ENCODE measurements at regions of chr2 and their contacts with region 1.

Region 1: GRCh38 chr2:204538182-204539018 is 6.9 kb upstream of the PARD3B start:
- DNase-seq: peak; percentile 93
- H3K4me3 ChIP-seq: peak overlapping the region in 2 of 3 experiments; percentile 6 to 51
- H3K27ac ChIP-seq: peak overlapping the region; percentile 81
- H3K4me1 ChIP-seq: peaks cover 32% of the 10 kb centered on the region
- H3K27me3 ChIP-seq: no peaks in the 10 kb centered on the region
- CTCF ChIP-seq: no peak
- POLR2A ChIP-seq: no peak

Region 2: GRCh38 chr2:204340511-204340910 is 197.9 kb before region 1 on chr2:
- CTCF ChIA-PET with region 1: no interaction called
- POLR2A ChIA-PET with region 1: no interaction called
- dilution Hi-C with region 1: no loop called
- intact Hi-C with region 1: loop called (anchors 5 kb)
- DNase-seq: no peak
- H3K4me3 ChIP-seq: no peak overlapping the region
- H3K27ac ChIP-seq: no peak overlapping the region
- H3K4me1 ChIP-seq: no peaks in the 10 kb centered on the region
- H3K27me3 ChIP-seq: no peaks in the 10 kb centered on the region
- CTCF ChIP-seq: no peak
- POLR2A ChIP-seq: no peak

Region 3: DNA sequence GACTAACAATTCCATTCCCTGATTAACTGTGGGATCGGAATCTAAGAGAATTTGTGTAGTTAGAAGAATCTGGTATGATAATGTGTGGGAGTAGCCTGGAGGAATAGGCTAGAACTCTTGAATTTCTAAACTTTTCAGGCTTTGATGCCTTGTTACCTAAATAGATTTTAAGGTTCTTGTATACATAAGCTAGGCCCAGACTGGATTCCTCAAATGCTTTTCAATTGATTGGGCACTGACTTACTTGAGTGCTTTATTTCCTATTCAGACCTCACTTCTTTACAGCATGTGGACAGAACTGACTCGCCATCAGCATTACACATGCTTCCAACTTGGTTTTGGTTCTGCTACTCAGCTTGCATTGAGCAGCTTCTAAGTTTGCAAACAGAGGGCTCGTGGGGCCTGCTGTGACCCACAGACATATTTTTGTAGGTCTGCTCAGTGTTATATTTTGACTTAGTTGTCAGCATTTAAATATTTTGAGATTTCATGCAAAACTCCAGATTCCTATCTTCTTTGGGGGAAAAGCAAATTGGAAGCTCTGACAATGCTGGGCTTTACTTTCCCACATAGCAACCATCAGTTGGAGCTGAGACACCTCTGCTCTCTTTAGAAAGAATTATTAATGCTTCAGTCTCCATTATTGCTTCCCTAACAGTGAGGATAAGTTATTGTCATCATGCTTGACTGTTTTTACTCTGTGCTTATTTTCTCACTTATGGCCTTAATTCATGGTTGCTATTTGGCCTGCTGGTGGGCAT is 12.5 kb after region 1 on chr2:
- CTCF ChIA-PET with region 1: no interaction called
- POLR2A ChIA-PET with region 1: no interaction called
- dilution Hi-C with region 1: no loop called
- intact Hi-C with region 1: no loop called
- DNase-seq: no peak
- H3K4me3 ChIP-seq: no peak overlapping the region
- H3K27ac ChIP-seq: no peak overlapping the region
- H3K4me1 ChIP-seq: peaks cover 13% of the 10 kb centered on the region
- H3K27me3 ChIP-seq: no peaks in the 10 kb centered on the region
- CTCF ChIP-seq: no peak
- POLR2A ChIP-seq: no peak